ENCODE measurements at regions of chr12 and their contacts with region 1.

Region 1: GRCh38 chr12:79737875-79738718 is 47.3 kb upstream of the PAWR start:
- DNase-seq: no peak
- ATAC-seq: peak; percentile 49
- H3K4me3 Mint-ChIP-seq: no peak overlapping the region
- H3K27ac Mint-ChIP-seq: no peak overlapping the region
- H3K4me1 Mint-ChIP-seq: no peaks in the 10 kb centered on the region
- H3K27me3 Mint-ChIP-seq: peaks cover 5% of the 10 kb centered on the region
- CTCF ChIP-seq: no peak

Region 2: DNA sequence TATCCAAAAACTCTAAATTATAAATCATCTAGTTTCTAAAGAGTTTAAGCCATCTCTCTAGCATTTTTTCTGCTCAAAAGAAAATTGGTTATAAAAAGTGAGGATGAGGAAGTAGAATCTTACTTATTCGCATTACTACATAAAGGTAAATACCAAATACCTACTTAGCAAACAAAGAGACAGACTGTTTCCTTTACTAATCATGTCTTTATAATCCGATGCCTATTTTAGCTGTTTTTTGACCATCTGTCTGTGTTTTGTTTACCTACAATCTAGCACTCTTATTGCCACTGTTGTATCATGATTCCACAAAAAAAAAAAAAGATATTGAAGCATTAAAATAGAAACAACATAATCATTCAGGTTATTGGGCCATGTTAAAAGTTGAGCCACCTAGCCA is 443.5 kb before region 1 on chr12:
- CTCF ChIA-PET with region 1: no interaction called
- POLR2A ChIA-PET with region 1: no interaction called
- intact Hi-C with region 1: no loop called
- DNase-seq: no peak
- ATAC-seq: no peak
- H3K4me3 Mint-ChIP-seq: no peak overlapping the region
- H3K27ac Mint-ChIP-seq: no peak overlapping the region
- H3K4me1 Mint-ChIP-seq: no peaks in the 10 kb centered on the region
- H3K27me3 Mint-ChIP-seq: no peaks in the 10 kb centered on the region
- CTCF ChIP-seq: no peak

Region 3: GRCh38 chr12:79407671-79408622 is 330.1 kb before region 1 on chr12:
- CTCF ChIA-PET with region 1: interaction called, 7 read pairs
- POLR2A ChIA-PET with region 1: no interaction called
- intact Hi-C with region 1: loop called (anchors 1 kb)
- DNase-seq: no peak
- ATAC-seq: peak; percentile 66
- H3K4me3 Mint-ChIP-seq: no peak overlapping the region
- H3K27ac Mint-ChIP-seq: no peak overlapping the region
- H3K4me1 Mint-ChIP-seq: no peaks in the 10 kb centered on the region
- H3K27me3 Mint-ChIP-seq: no peaks in the 10 kb centered on the region
- CTCF ChIP-seq: no peak

Region 4: DNA sequence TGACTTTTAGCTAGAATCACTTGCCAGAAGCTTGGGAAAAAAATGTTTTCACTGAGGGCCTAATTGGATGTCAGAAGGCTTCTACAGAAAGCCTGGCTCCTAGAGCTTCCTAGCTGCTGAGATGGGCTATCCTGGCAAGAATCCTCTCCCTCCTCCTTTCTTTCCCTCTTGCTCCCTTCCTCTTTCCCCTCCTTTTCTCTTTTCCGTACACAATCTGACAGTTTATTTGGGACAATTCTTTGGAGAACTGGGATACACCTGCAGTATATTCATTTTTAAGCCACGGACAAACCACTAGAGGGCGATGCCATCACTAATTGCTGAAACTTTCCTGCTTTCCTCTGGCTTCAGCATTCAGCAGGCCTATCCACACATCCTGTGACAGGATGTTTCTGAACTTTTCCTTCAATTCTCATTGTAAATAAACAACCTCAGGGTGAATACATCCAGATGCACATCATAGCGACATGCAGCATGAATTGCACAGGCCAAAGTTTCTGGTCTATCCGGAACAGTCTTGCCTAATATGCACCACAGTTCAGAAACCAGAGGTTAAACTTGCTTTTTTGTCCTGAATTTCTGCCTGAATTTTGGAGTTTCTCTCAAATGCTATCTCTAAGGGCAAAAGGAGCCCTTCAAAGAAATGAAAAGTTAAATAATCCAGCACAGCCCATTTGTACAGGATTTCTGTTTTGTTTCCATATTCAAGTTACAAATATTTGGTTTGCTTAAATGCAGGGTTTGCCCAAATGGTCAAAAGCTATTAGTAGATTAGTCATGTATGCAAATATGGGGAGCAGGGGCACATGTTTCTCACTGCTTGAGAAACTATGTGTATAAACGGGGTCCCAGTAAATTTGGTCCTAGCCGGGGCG is 190.1 kb before region 1 on chr12:
- CTCF ChIA-PET with region 1: interaction called, 23 read pairs
- POLR2A ChIA-PET with region 1: no interaction called
- intact Hi-C with region 1: loop called (anchors 1 kb)
- DNase-seq: no peak
- ATAC-seq: no peak
- H3K4me3 Mint-ChIP-seq: no peak overlapping the region
- H3K27ac Mint-ChIP-seq: no peak overlapping the region
- H3K4me1 Mint-ChIP-seq: no peaks in the 10 kb centered on the region
- H3K27me3 Mint-ChIP-seq: no peaks in the 10 kb centered on the region
- CTCF ChIP-seq: peak; percentile 29

Region 5: GRCh38 chr12:79690638-79691493 is 47.2 kb before region 1 on chr12 and contains the start of gene PAWR:
- CTCF ChIA-PET with region 1: interaction called, 3 read pairs
- POLR2A ChIA-PET with region 1: no interaction called
- intact Hi-C with region 1: loop called (anchors 2 kb)
- DNase-seq: peak; percentile 48
- ATAC-seq: peak; percentile 73
- H3K4me3 Mint-ChIP-seq: peak within 1 kb of the TSS; percentile 91
- H3K27ac Mint-ChIP-seq: peak within 1 kb of the TSS; percentile 79
- H3K4me1 Mint-ChIP-seq: peaks cover 37% of the 10 kb centered on the region
- H3K27me3 Mint-ChIP-seq: no peaks in the 10 kb centered on the region
- CTCF ChIP-seq: no peak
- total RNA-seq, gene PAWR: 50.0 and 53.1 TPM in 2 replicates